ENCODE measurements at regions of chr1 and their contacts with region 1.

Region 1: DNA sequence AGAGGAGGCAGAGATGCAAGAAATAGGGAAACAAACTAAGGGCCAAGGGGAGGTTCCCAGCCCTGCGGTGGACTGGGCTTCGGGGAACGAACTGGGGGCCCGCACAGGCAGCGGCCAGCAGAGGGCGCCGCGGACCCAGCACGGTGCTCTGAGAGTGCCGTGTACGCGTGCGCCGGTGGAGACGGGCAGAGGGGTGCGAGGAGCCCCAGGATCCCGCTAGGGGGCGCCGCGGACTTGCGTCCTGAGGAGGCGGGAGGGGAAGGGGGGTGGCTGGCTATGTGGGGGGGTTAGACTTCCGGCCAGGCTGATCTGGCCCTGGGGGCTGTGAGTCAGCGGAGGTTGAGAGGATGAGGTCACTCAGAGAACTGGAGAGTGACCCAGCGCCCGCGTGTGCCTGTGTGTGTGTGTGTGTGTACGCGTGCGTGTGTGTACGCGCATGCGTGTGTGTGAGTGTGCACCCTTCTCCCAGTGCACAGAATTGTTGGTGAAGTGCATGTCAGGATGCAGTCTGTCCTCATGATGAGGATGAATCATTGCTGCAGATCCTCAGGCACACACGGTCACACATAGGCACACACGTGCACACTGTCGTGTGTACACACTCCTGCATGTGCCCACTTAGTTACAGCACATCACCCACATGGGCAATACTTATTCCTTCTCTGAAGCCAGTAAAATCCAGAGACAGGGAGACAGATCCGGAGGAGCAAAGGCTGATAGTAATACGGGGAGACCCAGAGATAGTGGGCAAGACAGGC is 17.0 kb downstream of the NES start:
- DNase-seq: peak; percentile 97 to 100
- ATAC-seq: peak; percentile 95
- H3K4me3 ChIP-seq: no peak overlapping the region
- H3K27ac ChIP-seq: peak overlapping the region in 1 of 2 donors; percentile 73
- H3K4me1 ChIP-seq: peaks cover 0 to 1% of the 10 kb centered on the region in 2 donors
- H3K27me3 ChIP-seq: no peaks in the 10 kb centered on the region

Region 2: DNA sequence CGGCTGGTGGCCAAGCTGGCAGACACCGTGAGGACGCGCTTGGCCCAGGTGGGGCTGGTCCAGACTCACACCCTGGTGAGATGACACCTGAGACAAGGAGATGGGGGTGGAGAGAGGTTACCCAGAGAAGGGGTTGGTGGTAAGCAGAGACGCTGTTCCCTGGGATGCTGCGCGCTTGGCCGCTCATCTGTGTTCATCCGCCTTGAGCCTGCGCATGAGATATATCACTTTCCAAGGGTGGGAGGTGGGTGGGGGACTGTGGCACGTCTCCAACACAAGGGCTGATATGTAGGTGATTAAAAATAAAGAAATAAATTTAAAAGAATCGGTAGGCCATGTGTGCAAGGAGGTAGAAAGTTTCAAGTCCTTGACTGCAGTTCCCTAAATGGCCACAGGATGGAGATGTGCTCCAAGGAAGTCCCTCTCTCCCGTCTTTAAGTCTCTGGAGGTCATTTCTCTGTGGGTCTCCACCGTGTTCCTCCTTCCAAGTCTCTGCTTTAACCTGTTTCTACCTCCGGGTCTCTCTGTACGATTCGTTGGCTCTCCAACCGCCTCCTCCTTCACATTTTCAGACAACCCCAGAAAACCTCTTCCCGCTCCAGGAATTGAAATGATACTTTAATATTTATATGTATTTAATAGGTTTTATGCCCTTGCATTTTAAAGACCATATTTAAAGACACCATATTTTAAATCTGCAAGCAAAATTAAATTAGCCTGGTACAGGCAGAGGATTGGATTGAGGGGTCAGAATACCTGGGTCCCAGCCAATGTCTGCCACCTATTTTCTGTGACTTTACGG is 76.2 kb before region 1 on chr1:
- intact Hi-C with region 1: loop called (anchors 2 to 5 kb)
- DNase-seq: peak in 1 of 2 donors; percentile 76
- ATAC-seq: peak; percentile 74
- H3K4me3 ChIP-seq: no peak overlapping the region
- H3K27ac ChIP-seq: no peak overlapping the region
- H3K4me1 ChIP-seq: no peaks in the 10 kb centered on the region
- H3K27me3 ChIP-seq: no peaks in the 10 kb centered on the region

Region 3: DNA sequence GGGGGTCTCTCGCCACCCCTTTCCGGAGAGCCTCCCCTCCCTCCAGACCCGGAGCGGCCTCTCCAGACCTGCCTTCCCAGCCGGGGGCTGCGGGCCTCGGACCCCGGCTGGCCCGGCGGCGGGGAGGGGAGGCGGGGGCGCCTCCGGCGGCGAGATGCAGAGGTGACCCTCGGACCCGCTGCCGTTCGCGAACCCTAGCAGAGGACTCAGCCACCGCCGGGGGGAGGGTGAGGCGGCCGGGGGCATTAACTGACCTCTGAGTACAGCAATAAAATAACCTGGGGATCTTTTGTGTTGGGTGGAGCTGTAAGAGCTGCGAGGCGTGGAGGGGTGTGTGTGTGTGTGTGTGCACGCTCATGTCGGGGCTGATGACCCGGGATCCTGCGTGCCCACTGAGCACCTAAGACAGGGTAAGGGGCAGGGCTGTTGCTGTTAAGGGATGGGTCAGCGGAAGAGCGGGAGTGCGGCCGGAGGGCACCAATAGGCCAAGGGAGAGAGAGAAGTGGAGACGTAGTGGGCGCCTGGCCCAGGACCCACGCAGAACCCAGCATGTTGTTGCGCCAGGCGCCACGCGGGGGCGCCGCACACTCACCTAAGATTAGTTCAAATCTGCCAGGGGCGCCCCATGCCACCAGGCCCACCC is 34.6 kb before region 1 on chr1:
- intact Hi-C with region 1: loop called (anchors 1 to 5 kb)
- DNase-seq: peak; percentile 65 to 89
- ATAC-seq: peak; percentile 77
- H3K4me3 ChIP-seq: no peak overlapping the region
- H3K27ac ChIP-seq: no peak overlapping the region
- H3K4me1 ChIP-seq: no peaks in the 10 kb centered on the region
- H3K27me3 ChIP-seq: no peaks in the 10 kb centered on the region

Region 4: DNA sequence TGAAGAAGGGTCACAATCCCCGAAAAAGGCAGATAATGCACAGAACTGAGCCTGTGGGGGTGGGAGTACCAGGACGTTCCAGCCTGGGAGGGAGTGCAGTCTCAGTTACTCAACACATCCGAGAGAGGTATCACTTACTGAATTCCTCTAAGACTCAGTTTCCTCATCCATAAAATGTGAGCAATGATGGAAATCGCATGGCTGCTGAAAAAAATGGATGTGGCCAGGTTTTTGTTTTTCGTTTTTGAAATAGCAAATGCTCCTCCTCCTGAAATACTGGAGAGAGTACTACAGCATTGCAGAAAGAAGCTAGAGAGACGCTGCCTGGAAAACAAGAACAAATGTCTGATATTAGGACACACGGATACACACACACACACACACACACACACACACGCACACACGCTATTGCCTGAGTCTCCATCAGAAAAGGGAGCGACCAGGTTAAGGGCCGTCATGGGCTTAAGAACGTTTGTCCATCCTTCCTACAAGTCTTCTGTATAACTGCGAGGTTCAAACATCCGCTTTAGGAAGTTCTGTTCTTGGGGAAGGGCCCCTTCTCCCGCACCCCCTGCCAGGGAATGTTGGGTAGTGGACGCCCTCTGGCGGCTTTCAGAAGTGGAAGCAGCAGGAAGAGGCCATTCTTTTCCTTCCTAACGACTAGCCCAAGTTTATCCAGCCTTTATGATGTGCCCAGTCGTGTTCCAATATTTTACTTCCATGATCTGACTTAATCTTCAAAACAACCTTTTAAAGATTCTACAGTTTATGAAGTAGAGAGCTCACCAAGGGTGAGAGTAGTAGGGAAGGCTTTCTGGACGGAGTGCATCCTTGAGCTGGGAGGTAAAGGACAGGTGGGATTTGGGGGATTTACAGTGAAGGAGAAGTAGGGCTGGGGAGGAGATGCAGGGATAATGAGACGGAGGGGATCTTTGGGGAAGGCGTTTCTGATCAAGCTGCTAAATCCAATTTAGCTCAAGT is 17.7 kb after region 1 on chr1:
- intact Hi-C with region 1: loop called (anchors 1 kb)
- DNase-seq: peak; percentile 82 to 88
- ATAC-seq: peak; percentile 89
- H3K4me3 ChIP-seq: no peak overlapping the region
- H3K27ac ChIP-seq: no peak overlapping the region
- H3K4me1 ChIP-seq: no peaks in the 10 kb centered on the region
- H3K27me3 ChIP-seq: no peaks in the 10 kb centered on the region

Measured in aorta (tissue), 5 donors.